CD8-positive, alpha-beta T cell (primary cell): ENCODE measurements at regions of chr9 and their contacts with region 1.

Region 1: DNA sequence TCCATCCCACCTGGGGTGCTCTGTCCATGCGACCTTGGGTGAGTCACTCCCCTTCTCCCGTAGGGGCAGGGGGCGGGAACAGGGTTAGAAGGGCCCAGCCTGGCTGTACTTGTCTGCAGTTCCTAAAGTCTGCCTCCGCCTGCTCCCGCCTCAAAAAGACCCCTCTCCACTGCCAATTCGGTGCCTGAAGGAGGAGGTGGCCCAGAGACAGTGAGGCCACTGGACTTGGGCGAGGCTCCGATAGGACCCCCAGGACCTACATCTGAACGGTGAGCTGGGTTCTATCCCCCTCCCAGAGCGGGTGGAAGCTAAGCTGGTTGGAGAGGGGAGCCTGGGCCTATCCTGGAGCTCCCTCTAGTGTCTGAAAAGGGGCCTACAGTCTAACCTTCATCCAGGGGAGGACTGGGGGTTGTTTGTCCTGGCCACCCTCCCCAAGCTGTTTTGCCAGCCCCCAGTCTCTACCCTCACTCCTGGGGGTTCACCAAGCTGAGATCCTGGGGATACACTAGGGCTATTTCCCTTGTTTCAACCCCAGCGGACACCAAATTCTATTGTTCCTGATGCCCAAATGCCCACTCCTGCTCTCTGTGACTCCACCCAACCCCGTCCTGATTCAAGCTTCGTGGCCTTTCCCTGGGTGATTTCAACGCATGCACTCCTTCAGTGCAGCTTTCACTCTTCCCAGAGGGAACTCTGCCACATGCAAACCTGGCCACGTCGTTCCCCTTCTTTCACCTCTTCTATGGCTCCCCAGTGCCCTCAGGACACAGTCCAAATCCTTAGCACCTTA is 6.1 kb upstream of the CRB2 start:
- DNase-seq: peak; percentile 35 to 79 (median 66)
- ATAC-seq: peak; percentile 86
- H3K4me3 ChIP-seq: no peak overlapping the region
- H3K4me3 Mint-ChIP-seq: no peak overlapping the region
- H3K27ac ChIP-seq: no peak overlapping the region
- H3K27ac Mint-ChIP-seq: no peak overlapping the region
- H3K4me1 ChIP-seq: peaks cover 4% of the 10 kb centered on the region
- H3K4me1 Mint-ChIP-seq: peaks cover 3% of the 10 kb centered on the region
- H3K27me3 ChIP-seq: peaks cover 0 to 4% of the 10 kb centered on the region in 2 experiments
- H3K27me3 Mint-ChIP-seq: peaks cover 11% of the 10 kb centered on the region
- CTCF ChIP-seq: peak; percentile 82

Region 2: GRCh38 chr9:123073991-123074422 is 275.9 kb before region 1 on chr9:
- CTCF ChIA-PET with region 1: interaction called, 62 read pairs
- POLR2A ChIA-PET with region 1: no interaction called
- intact Hi-C with region 1: no loop called
- DNase-seq: no peak
- ATAC-seq: no peak
- H3K4me3 ChIP-seq: no peak overlapping the region
- H3K4me3 Mint-ChIP-seq: no peak overlapping the region
- H3K27ac ChIP-seq: no peak overlapping the region
- H3K27ac Mint-ChIP-seq: no peak overlapping the region
- H3K4me1 ChIP-seq: no peaks in the 10 kb centered on the region
- H3K4me1 Mint-ChIP-seq: no peaks in the 10 kb centered on the region
- H3K27me3 ChIP-seq: no peaks in the 10 kb centered on the region
- H3K27me3 Mint-ChIP-seq: no peaks in the 10 kb centered on the region
- CTCF ChIP-seq: no peak

Region 3: GRCh38 chr9:123091459-123091858 is 258.4 kb before region 1 on chr9:
- CTCF ChIA-PET with region 1: interaction called, 26 read pairs
- POLR2A ChIA-PET with region 1: no interaction called
- intact Hi-C with region 1: no loop called
- DNase-seq: no peak
- ATAC-seq: no peak
- H3K4me3 ChIP-seq: no peak overlapping the region
- H3K4me3 Mint-ChIP-seq: no peak overlapping the region
- H3K27ac ChIP-seq: no peak overlapping the region
- H3K27ac Mint-ChIP-seq: no peak overlapping the region
- H3K4me1 ChIP-seq: no peaks in the 10 kb centered on the region
- H3K4me1 Mint-ChIP-seq: no peaks in the 10 kb centered on the region
- H3K27me3 ChIP-seq: no peaks in the 10 kb centered on the region
- H3K27me3 Mint-ChIP-seq: no peaks in the 10 kb centered on the region
- CTCF ChIP-seq: no peak

Region 4: DNA sequence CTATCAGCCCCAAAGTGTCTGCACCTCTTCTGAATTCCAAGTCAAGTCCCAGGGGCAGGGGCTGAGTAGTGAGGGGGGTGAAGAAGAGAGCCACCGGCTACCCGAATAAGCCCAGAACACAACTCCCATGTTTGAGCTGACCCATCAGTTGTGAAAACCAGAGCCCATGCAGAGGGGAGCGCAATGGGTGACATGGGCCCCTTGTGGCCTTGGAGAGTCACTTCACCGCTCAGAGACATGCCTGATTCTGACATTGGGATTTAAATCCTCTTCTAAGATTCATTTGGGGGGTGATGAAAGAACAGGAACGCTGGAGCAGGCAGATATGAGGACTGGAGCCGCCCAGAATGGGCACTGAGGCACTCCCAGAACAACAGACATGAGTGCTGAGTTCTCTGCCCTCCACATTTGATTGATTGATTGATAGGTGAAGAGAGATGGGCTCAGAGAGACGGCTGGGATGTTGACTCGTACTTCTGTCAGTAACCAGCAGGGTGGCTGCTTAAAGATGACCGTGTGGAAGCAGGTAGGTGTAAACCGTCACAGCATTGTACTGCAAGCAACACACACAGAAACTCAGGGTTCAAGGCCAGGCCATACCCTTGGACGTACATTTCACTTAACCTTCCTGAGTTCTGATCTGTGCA is 242.1 kb before region 1 on chr9:
- CTCF ChIA-PET with region 1: interaction called, 33 read pairs
- POLR2A ChIA-PET with region 1: interaction called, 3 read pairs
- intact Hi-C with region 1: no loop called
- DNase-seq: no peak
- ATAC-seq: no peak
- H3K4me3 ChIP-seq: no peak overlapping the region
- H3K4me3 Mint-ChIP-seq: no peak overlapping the region
- H3K27ac ChIP-seq: no peak overlapping the region
- H3K27ac Mint-ChIP-seq: peak overlapping the region; percentile 70
- H3K4me1 ChIP-seq: peaks cover 14% of the 10 kb centered on the region
- H3K4me1 Mint-ChIP-seq: peaks cover 18% of the 10 kb centered on the region
- H3K27me3 ChIP-seq: no peaks in the 10 kb centered on the region
- H3K27me3 Mint-ChIP-seq: no peaks in the 10 kb centered on the region
- CTCF ChIP-seq: no peak

Region 5: GRCh38 chr9:123305879-123306278 is 44.0 kb before region 1 on chr9:
- CTCF ChIA-PET with region 1: interaction called, 13 read pairs
- POLR2A ChIA-PET with region 1: no interaction called
- intact Hi-C with region 1: no loop called
- DNase-seq: no peak
- ATAC-seq: no peak
- H3K4me3 ChIP-seq: no peak overlapping the region
- H3K4me3 Mint-ChIP-seq: no peak overlapping the region
- H3K27ac ChIP-seq: no peak overlapping the region
- H3K27ac Mint-ChIP-seq: peak overlapping the region; percentile 45
- H3K4me1 ChIP-seq: peaks cover 38% of the 10 kb centered on the region
- H3K4me1 Mint-ChIP-seq: peaks cover 42% of the 10 kb centered on the region
- H3K27me3 ChIP-seq: no peaks in the 10 kb centered on the region
- H3K27me3 Mint-ChIP-seq: no peaks in the 10 kb centered on the region
- CTCF ChIP-seq: no peak

Region 6: GRCh38 chr9:123364241-123364824 is 14.4 kb after region 1 on chr9:
- CTCF ChIA-PET with region 1: interaction called, 12 read pairs
- POLR2A ChIA-PET with region 1: no interaction called
- intact Hi-C with region 1: no loop called
- DNase-seq: no peak
- ATAC-seq: no peak
- H3K4me3 ChIP-seq: no peak overlapping the region
- H3K4me3 Mint-ChIP-seq: no peak overlapping the region
- H3K27ac ChIP-seq: no peak overlapping the region
- H3K27ac Mint-ChIP-seq: no peak overlapping the region
- H3K4me1 ChIP-seq: no peaks in the 10 kb centered on the region
- H3K4me1 Mint-ChIP-seq: peaks cover 7% of the 10 kb centered on the region
- H3K27me3 ChIP-seq: no peaks in the 10 kb centered on the region
- H3K27me3 Mint-ChIP-seq: peaks cover 13% of the 10 kb centered on the region
- CTCF ChIP-seq: no peak

Region 7: DNA sequence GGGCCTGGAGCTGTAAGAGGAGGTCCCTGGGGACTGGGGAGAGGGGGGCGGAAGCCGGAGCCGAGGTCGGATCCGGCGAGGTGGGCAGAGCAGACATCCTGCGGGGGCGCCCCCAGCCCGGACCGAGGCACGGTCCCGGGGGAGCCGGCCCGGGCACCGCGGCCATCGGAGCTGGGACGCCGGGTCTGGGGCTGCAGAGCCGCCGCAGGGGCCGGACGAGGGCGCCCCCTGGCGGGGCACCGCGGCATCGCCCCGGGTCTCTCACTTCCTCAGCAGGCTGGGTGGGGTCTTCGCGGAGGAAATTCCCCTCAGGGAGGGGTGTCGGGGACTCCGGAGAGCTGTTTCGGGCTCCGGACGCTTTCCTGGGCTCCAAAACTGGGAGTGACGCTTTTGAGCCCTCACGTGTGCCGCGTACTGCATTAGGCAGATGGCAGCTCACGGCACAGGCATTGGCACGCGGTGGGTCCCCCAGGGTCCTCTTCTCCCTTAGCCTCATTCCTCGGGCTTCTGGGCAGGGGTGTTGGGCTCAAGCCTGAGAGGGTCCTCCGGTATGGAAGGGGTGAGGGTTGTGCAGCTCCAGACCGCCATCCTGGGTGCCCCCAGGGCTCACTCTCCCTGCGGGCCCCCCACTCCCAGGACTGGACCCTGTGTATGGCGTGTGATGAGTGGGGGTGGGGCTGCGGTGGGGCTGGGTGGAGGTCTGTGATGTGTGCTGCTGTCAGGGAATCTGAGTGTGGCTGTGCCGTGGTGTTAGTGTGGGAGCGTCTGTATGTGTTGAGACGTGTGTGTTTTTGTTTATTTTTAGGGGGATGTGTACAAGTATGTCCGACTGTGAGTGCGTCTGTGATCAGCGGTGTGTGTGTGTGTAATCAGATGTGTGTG is 691.3 kb after region 1 on chr9:
- CTCF ChIA-PET with region 1: no interaction called
- POLR2A ChIA-PET with region 1: no interaction called
- intact Hi-C with region 1: loop called in 1 of 2 experiments (anchors 5 kb)
- DNase-seq: peak in 8 of 9 experiments; percentile 3 to 62 (median 38)
- ATAC-seq: no peak
- H3K4me3 ChIP-seq: no peak overlapping the region
- H3K4me3 Mint-ChIP-seq: peak overlapping the region; percentile 65
- H3K27ac ChIP-seq: no peak overlapping the region
- H3K27ac Mint-ChIP-seq: no peak overlapping the region
- H3K4me1 ChIP-seq: peaks cover 7% of the 10 kb centered on the region
- H3K4me1 Mint-ChIP-seq: peaks cover 14% of the 10 kb centered on the region
- H3K27me3 ChIP-seq: peaks cover 8 to 17% of the 10 kb centered on the region in 2 experiments
- H3K27me3 Mint-ChIP-seq: peaks cover 60% of the 10 kb centered on the region
- CTCF ChIP-seq: peak; percentile 90